ENCODE measurements at regions of chr3 and their contacts with region 1.

Region 1: GRCh38 chr3:90062016-90062415 is 954.6 kb downstream of the EPHA3 start:
- DNase-seq: no peak
- ATAC-seq: no peak
- H3K4me3 ChIP-seq: no peak overlapping the region
- H3K27ac ChIP-seq: no peak overlapping the region
- H3K4me1 ChIP-seq: no peaks in the 10 kb centered on the region
- H3K27me3 ChIP-seq: no peaks in the 10 kb centered on the region
- CTCF ChIP-seq: no peak
- EP300 ChIP-seq: no peak
- POLR2A ChIP-seq: no peak
- RAD21 ChIP-seq: no peak

Region 2: DNA sequence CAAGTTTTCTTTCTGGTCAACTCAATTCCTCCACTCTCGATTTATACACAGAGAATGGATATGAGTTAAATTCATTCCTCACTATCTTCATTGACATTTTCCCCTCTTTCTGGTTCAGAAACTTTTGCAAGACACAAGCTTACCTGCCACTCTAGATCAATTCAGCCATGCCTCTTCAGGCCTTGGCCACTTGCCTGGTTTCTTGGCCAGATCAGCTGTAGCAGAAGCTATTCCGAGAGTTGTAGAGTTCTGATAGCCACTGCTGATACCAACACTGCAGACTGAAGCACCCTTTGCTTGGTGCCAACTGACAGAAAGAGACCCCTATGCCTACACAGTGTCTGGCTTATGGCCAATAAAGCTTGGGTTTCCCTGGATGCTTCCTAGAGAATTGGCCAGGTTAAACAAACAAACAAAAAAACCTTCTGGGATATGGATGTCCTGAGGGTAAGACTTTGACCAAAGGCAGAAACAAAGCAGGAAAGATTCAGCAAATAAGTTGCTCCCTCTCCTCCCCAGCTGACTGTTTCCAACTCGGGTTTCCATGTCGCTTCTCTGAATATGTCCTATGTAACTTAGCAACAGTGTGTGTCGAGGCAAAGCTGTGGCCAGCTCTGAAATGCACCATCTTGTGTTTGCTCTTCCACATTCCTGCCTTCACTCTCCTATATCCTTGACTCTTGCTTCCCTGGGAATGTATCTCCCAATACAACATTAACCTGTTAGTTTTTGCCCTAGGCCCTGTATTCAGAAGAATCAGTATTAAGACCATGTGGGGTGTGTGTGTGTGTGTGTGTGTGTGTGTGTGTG is 433.0 kb before region 1 on chr3:
- CTCF ChIA-PET with region 1: no interaction called
- POLR2A ChIA-PET with region 1: no interaction called
- in situ Hi-C with region 1: no loop called
- intact Hi-C with region 1: no loop called
- DNase-seq: peak; percentile 15
- ATAC-seq: no peak
- H3K4me3 ChIP-seq: no peak overlapping the region
- H3K27ac ChIP-seq: no peak overlapping the region
- H3K4me1 ChIP-seq: peaks cover 21% of the 10 kb centered on the region
- H3K27me3 ChIP-seq: no peaks in the 10 kb centered on the region
- CTCF ChIP-seq: no peak
- EP300 ChIP-seq: no peak
- POLR2A ChIP-seq: no peak
- RAD21 ChIP-seq: no peak

Region 3: DNA sequence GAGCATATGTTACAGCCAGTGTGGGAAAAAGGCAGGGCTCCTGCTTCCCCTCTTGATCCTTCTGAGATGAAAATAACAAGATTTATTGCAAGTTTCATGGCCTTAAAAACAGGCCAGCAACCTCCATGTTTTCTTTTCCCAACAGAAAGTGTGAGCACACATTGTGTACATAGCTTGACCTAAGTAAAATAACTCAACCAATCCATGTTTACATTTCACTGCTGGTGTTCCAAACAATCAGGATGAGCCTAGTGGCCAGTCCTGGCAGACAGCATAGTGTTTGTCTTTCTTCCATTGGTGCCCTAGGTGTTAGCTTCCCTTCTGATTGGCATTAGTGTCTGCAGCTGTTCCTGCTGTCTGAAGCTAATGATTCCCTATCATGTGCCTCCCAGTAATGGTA is 106.9 kb before region 1 on chr3:
- CTCF ChIA-PET with region 1: no interaction called
- POLR2A ChIA-PET with region 1: no interaction called
- in situ Hi-C with region 1: loop called (anchors 25 kb)
- intact Hi-C with region 1: no loop called
- DNase-seq: no peak
- ATAC-seq: no peak
- H3K4me3 ChIP-seq: no peak overlapping the region
- H3K27ac ChIP-seq: no peak overlapping the region
- H3K4me1 ChIP-seq: no peaks in the 10 kb centered on the region
- H3K27me3 ChIP-seq: no peaks in the 10 kb centered on the region
- CTCF ChIP-seq: no peak
- EP300 ChIP-seq: no peak
- POLR2A ChIP-seq: no peak
- RAD21 ChIP-seq: no peak

Region 4: GRCh38 chr3:90092994-90093393 is 31.0 kb after region 1 on chr3:
- CTCF ChIA-PET with region 1: no interaction called
- POLR2A ChIA-PET with region 1: no interaction called
- in situ Hi-C with region 1: no loop called
- intact Hi-C with region 1: no loop called
- DNase-seq: peak; percentile 13
- ATAC-seq: peak; percentile 44; the same call in 1 of the 3 replicates
- H3K4me3 ChIP-seq: no peak overlapping the region
- H3K27ac ChIP-seq: no peak overlapping the region
- H3K4me1 ChIP-seq: no peaks in the 10 kb centered on the region
- H3K27me3 ChIP-seq: no peaks in the 10 kb centered on the region; a peak in 1 of 5 replicates
- CTCF ChIP-seq: peak; percentile 37; the same call in 1 of the 2 replicates
- EP300 ChIP-seq: no peak
- POLR2A ChIP-seq: no peak
- RAD21 ChIP-seq: no peak

Measured in HepG2 (cell line).